Panc1 (cell line): ENCODE measurements at regions of chr12 and their contacts with region 1.

Region 1: DNA sequence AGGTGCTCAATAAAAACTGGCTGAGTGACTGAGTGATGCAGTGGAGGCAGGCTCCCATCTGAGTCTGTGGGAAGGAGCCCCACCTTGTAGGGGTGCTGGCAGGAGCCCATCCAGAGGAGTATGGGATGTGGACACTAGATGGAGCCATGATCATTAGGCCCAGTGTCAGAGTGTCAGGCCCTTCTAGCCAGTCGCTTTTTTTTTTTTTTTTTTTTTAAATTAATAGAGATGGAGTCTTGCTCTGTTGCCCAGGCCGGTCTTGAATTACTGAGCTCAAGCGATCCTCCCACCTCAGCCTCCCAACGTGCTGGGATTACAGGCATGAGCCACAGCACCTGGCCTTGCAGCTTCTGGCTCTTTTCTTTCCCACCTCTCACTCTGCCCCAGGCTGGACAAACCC is 11.5 kb downstream of the RITA1 start:
- DNase-seq: peak; percentile 67
- ATAC-seq: peak; percentile 81
- H3K4me3 ChIP-seq: no peak overlapping the region
- H3K27ac ChIP-seq: peak overlapping the region; percentile 40
- H3K4me1 ChIP-seq: peaks cover 36% of the 10 kb centered on the region
- H3K27me3 ChIP-seq: no peaks in the 10 kb centered on the region
- CTCF ChIP-seq: peak; percentile 91

Region 2: GRCh38 chr12:112393328-112393727 is 803.7 kb before region 1 on chr12:
- CTCF ChIA-PET with region 1: no interaction called
- POLR2A ChIA-PET with region 1: no interaction called
- in situ Hi-C with region 1: no loop called
- intact Hi-C with region 1: no loop called
- DNase-seq: no peak
- ATAC-seq: no peak
- H3K4me3 ChIP-seq: no peak overlapping the region
- H3K27ac ChIP-seq: no peak overlapping the region
- H3K4me1 ChIP-seq: no peaks in the 10 kb centered on the region
- H3K27me3 ChIP-seq: no peaks in the 10 kb centered on the region
- CTCF ChIP-seq: no peak

Region 3: DNA sequence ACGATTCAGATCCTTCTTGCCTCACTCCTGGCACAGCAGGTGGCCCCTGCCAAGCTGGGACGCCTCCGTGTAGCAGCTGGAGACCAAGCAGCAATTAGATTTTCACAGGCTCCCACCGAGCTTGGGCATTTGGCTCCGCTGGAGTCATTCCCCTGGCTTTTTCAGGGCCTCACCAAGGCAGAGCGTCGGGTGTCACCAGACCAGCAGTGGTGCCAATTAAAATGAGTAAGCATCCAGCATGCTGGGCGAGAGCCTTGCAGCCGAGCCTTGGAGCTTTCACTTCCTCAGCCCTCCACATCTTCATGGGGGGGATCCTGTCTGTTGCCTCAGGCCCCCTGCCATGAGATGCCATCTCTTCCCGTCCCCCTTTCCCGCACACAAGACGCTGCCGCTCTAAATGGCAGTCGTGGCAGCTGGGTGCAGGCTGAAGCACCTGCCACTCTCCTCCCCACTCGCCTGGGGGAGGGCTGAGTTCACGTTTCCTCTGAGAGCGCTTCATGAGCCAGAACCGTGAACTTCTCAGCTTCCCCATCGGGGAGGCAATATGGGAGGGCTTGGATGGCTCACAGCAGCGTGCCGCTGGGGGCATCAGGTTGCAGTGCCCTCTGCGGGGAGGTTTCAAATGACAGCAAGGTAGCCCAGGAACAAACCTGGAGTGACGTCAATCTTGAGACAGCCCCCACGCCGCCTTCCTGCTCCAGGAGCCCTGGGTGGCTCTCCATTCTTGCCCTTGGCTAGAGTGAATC is 36.0 kb after region 1 on chr12:
- CTCF ChIA-PET with region 1: no interaction called
- POLR2A ChIA-PET with region 1: no interaction called
- in situ Hi-C with region 1: no loop called
- intact Hi-C with region 1: no loop called
- DNase-seq: no peak
- ATAC-seq: no peak
- H3K4me3 ChIP-seq: no peak overlapping the region
- H3K27ac ChIP-seq: no peak overlapping the region
- H3K4me1 ChIP-seq: 0 out of 2 replicates have a peak, but pooled peaks cover 5% of the 10 kb centered on the region
- H3K27me3 ChIP-seq: no peaks in the 10 kb centered on the region
- CTCF ChIP-seq: no peak

Region 4: DNA sequence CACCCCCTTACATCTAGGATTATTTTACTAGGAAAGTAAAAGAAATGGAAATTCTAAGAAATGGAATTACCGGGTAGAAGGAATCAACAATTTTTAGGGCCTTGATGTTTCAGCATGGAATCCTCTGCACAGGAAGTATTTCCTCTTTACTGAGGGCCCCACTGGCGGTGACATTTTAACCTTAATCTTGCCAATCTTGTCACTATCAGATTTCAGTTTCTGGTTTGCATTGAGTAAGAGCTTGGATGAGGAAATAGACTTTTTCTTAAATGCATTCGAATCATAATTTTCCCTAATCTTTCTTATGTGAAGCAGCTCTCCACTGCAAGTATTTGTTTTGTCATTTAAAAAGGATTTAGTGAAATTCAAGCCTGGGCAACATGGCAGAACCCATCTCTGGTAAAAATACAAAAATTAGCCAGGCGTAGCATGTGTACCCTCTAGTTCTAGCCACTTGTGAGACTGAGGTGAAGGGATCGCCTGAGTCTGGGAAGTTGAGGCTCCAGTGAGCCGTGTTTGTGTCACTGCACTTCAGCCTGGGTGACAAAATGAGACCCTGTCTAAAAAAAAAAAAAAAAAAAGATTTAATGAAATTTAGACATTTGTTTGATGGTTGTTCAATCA is 65.0 kb after region 1 on chr12:
- CTCF ChIA-PET with region 1: no interaction called
- POLR2A ChIA-PET with region 1: interaction called, 20 read pairs
- in situ Hi-C with region 1: no loop called
- intact Hi-C with region 1: no loop called
- DNase-seq: no peak
- ATAC-seq: no peak
- H3K4me3 ChIP-seq: no peak overlapping the region
- H3K27ac ChIP-seq: no peak overlapping the region
- H3K4me1 ChIP-seq: no peaks in the 10 kb centered on the region
- H3K27me3 ChIP-seq: no peaks in the 10 kb centered on the region
- CTCF ChIP-seq: no peak